Activated CD8-positive, alpha-beta T cell treated with anti-CD3 and anti-CD28 coated beads for 36 hours (primary cell): ENCODE measurements at regions of chr22 and their contacts with region 1.

Region 1: DNA sequence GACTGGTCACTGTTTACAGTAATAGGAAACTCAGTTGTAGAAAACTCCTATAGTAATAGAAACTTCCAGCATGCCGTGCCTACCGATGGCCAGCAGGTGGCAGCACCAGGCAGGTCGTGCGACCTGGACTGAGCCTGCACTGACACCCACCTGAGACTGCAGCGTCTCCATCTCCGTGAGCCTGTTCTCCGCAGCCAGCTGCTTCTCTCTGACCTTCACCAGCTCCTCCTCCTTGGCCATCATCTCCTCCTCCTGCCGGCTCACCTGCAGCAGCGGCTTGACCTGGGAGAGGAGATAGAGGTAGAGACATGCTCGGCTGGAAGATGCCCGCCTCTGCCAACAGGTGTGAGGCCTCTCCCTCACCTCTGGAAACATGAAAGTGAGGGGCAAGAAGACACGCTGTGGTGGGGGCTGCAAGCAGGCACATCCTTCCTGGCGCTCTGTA is 48.5 kb downstream of the APOL1 start:
- DNase-seq: peak; percentile 87
- ATAC-seq: peak; percentile 93
- H3K4me3 Mint-ChIP-seq: no peak overlapping the region
- H3K27ac Mint-ChIP-seq: peak overlapping the region; percentile 54
- H3K4me1 Mint-ChIP-seq: peaks cover 6% of the 10 kb centered on the region
- H3K27me3 Mint-ChIP-seq: no peaks in the 10 kb centered on the region
- CTCF ChIP-seq: peak; percentile 94

Region 2: GRCh38 chr22:36277482-36278291 is 23.7 kb before region 1 on chr22:
- CTCF ChIA-PET with region 1: interaction called, 13 read pairs
- POLR2A ChIA-PET with region 1: interaction called, 6 read pairs
- intact Hi-C with region 1: no loop called
- DNase-seq: peak; percentile 83
- ATAC-seq: peak; percentile 88
- H3K4me3 Mint-ChIP-seq: no peak overlapping the region
- H3K27ac Mint-ChIP-seq: peak overlapping the region; percentile 22
- H3K4me1 Mint-ChIP-seq: peaks cover 24% of the 10 kb centered on the region
- H3K27me3 Mint-ChIP-seq: no peaks in the 10 kb centered on the region
- CTCF ChIP-seq: peak; percentile 71

Region 3: GRCh38 chr22:36311386-36312358 is 10.3 kb after region 1 on chr22:
- CTCF ChIA-PET with region 1: interaction called, 49 read pairs
- POLR2A ChIA-PET with region 1: interaction called, 12 read pairs
- intact Hi-C with region 1: no loop called
- DNase-seq: no peak
- ATAC-seq: no peak
- H3K4me3 Mint-ChIP-seq: no peak overlapping the region
- H3K27ac Mint-ChIP-seq: peak overlapping the region; percentile 30
- H3K4me1 Mint-ChIP-seq: peaks cover 6% of the 10 kb centered on the region
- H3K27me3 Mint-ChIP-seq: no peaks in the 10 kb centered on the region
- CTCF ChIP-seq: no peak

Region 4: DNA sequence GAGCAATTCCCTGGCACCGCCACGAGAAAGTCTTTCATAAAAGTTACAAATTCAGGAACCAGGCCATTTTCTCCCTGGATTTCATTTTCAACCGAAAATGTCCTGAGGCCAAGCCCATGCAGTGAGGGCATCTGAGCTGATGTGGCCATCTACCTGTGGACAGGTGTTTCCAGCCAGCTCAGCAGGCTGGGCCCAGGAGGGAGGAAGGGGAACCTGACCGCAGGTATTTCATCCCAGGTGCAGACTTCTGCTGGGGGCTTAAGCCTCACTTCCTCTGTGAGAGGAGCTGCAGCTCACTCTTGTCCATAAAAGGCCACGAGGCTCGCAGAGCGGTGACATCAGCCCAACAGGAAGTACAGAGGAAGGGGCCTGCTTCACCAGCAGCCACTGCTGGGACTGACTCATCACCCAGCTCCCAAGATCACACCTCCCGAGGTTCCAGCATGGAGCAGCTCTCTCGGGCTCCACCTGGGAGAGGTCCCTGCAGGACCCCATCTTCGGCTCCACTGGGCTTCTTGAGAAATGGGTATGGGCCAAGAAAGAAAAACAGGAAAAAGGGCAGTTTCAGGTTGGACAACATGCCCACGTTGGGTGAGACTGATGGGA is 30.0 kb after region 1 on chr22:
- CTCF ChIA-PET with region 1: interaction called, 55 read pairs
- POLR2A ChIA-PET with region 1: interaction called, 4 read pairs
- intact Hi-C with region 1: no loop called
- DNase-seq: peak; percentile 90
- ATAC-seq: peak; percentile 51
- H3K4me3 Mint-ChIP-seq: peak overlapping the region; percentile 90
- H3K27ac Mint-ChIP-seq: peak overlapping the region; percentile 100
- H3K4me1 Mint-ChIP-seq: peaks cover 97% of the 10 kb centered on the region
- H3K27me3 Mint-ChIP-seq: no peaks in the 10 kb centered on the region
- CTCF ChIP-seq: no peak

Region 5: DNA sequence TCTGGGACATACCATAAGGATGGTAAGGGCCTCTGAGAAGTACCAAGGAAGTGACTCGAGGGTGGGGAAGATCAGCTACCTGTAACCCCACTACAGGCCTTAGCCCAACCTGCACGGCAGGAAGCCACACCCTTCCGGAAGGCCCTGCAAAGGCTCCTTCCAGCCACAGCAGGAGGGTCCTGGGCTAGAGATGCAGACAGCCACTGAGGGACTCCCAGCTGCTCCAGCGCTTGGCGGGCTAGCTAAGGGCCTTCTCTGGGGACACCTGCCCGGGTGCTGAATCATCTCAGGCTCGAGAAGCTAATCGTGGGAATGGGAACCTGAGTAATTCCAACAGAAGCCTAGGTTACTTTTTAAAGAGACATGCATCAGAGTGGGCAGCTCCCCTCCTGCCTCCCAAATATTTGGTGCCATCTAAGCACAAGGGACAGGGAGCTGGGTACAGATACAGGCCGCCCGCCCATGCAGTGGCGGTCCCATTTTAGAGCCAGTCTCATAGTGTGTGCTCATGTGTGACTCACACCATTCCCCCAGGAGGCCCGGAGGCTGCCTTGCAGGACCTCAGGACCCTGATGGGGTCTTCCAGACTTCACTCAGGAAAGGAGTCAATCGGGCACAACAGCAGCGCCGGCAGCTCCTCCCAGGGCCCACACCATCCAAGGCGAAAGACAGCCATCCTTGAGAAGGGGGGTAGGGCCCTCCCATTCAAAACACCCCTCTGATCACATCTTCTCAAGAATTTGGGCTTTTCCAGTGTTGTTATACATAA is 78.4 kb after region 1 on chr22:
- CTCF ChIA-PET with region 1: interaction called, 12 read pairs
- POLR2A ChIA-PET with region 1: interaction called, 6 read pairs
- intact Hi-C with region 1: no loop called
- DNase-seq: peak; percentile 61
- ATAC-seq: peak; percentile 29
- H3K4me3 Mint-ChIP-seq: peak overlapping the region; percentile 72
- H3K27ac Mint-ChIP-seq: peak overlapping the region; percentile 96
- H3K4me1 Mint-ChIP-seq: peaks cover 86% of the 10 kb centered on the region
- H3K27me3 Mint-ChIP-seq: no peaks in the 10 kb centered on the region
- CTCF ChIP-seq: no peak

Region 6: GRCh38 chr22:36470162-36470993 is 169.0 kb after region 1 on chr22:
- CTCF ChIA-PET with region 1: interaction called, 152 read pairs
- POLR2A ChIA-PET with region 1: interaction called, 3 read pairs
- intact Hi-C with region 1: loop called (anchors 1 kb)
- DNase-seq: peak; percentile 86
- ATAC-seq: peak; percentile 95
- H3K4me3 Mint-ChIP-seq: no peak overlapping the region
- H3K27ac Mint-ChIP-seq: peak overlapping the region; percentile 57
- H3K4me1 Mint-ChIP-seq: peaks cover 28% of the 10 kb centered on the region
- H3K27me3 Mint-ChIP-seq: no peaks in the 10 kb centered on the region
- CTCF ChIP-seq: peak; percentile 93